ENCODE measurements at regions of chr3 and their contacts with region 1.

Region 1: GRCh38 chr3:124559881-124560574 is 170.2 kb upstream of the UMPS start:
- DNase-seq: peak; percentile 83
- ATAC-seq: peak; percentile 72
- H3K4me3 ChIP-seq: no peak overlapping the region
- H3K27ac ChIP-seq: no peak overlapping the region
- H3K4me1 ChIP-seq: peaks cover 14% of the 10 kb centered on the region
- H3K27me3 ChIP-seq: peaks cover 8% of the 10 kb centered on the region
- CTCF ChIP-seq: peak; percentile 86
- POLR2A ChIP-seq: no peak
- RAD21 ChIP-seq: peak; percentile 83

Region 2: GRCh38 chr3:124014366-124014942 is 545.6 kb before region 1 on chr3:
- CTCF ChIA-PET with region 1: no interaction called
- POLR2A ChIA-PET with region 1: no interaction called
- dilution Hi-C with region 1: no loop called
- in situ Hi-C with region 1: no loop called
- intact Hi-C with region 1: loop called (anchors 5 kb)
- DNase-seq: peak; percentile 17
- ATAC-seq: no peak
- H3K4me3 ChIP-seq: no peak overlapping the region
- H3K27ac ChIP-seq: no peak overlapping the region
- H3K4me1 ChIP-seq: no peaks in the 10 kb centered on the region
- H3K27me3 ChIP-seq: peaks cover 25% of the 10 kb centered on the region
- CTCF ChIP-seq: no peak
- POLR2A ChIP-seq: no peak
- RAD21 ChIP-seq: no peak

Region 3: DNA sequence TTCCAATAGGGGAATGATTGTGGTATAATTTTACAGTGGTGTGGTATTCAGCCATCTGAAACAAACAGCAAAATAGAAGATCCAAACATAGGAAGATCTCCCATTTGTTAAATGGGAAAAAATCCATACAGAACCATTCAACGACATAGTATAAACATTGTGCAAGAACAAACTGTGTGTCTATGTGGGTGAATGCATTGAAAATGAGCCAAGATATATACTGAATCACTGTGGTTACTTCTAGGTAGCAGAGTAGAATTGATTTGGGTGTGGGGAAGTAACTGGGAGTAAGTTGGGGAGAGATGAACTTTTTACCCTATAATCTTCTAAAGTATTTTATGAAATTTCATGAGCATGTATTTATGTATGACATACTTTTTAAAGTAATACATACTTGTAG is 47.1 kb after region 1 on chr3:
- CTCF ChIA-PET with region 1: no interaction called
- POLR2A ChIA-PET with region 1: no interaction called
- dilution Hi-C with region 1: no loop called
- in situ Hi-C with region 1: no loop called
- intact Hi-C with region 1: no loop called
- DNase-seq: peak; percentile 83
- ATAC-seq: peak; percentile 87
- H3K4me3 ChIP-seq: no peak overlapping the region
- H3K27ac ChIP-seq: no peak overlapping the region
- H3K4me1 ChIP-seq: peaks cover 2% of the 10 kb centered on the region; the same call in 1 of the 2 replicates
- H3K27me3 ChIP-seq: peaks cover 26% of the 10 kb centered on the region
- CTCF ChIP-seq: no peak
- POLR2A ChIP-seq: no peak
- RAD21 ChIP-seq: no peak

Region 4: GRCh38 chr3:124688581-124689454 is 128.8 kb after region 1 on chr3:
- CTCF ChIA-PET with region 1: interaction called, 18 read pairs
- POLR2A ChIA-PET with region 1: no interaction called
- dilution Hi-C with region 1: no loop called
- in situ Hi-C with region 1: loop called (anchors 5 kb)
- intact Hi-C with region 1: loop called (anchors 1 kb)
- DNase-seq: peak; percentile 78
- ATAC-seq: peak; percentile 95
- H3K4me3 ChIP-seq: no peak overlapping the region
- H3K27ac ChIP-seq: no peak overlapping the region
- H3K4me1 ChIP-seq: no peaks in the 10 kb centered on the region
- H3K27me3 ChIP-seq: peaks cover 11% of the 10 kb centered on the region
- CTCF ChIP-seq: peak; percentile 86
- POLR2A ChIP-seq: no peak
- RAD21 ChIP-seq: peak; percentile 87

Region 5: DNA sequence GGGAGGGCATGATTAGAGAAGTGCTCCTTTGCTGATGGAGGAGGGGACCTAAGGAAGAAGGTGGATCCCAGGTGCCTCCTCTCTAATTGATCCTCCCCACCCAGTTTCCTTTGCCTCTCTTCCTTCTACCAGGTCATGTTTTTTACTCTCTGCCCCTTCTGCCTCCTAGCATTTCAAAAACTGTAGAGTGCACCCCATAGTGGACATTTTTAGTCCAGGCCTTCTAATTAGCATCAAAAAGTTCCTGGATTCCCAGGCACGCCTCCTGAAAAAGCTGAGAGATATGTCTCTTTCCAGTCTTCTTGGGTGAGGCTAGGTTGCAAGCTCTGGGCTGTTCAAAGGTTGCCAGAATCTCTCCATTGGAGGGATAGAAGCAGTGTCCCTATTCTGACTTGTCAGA is 345.8 kb after region 1 on chr3:
- CTCF ChIA-PET with region 1: interaction called, 4 read pairs
- POLR2A ChIA-PET with region 1: no interaction called
- dilution Hi-C with region 1: no loop called
- in situ Hi-C with region 1: no loop called
- intact Hi-C with region 1: loop called (anchors 1 kb)
- DNase-seq: no peak
- ATAC-seq: no peak
- H3K4me3 ChIP-seq: no peak overlapping the region
- H3K27ac ChIP-seq: no peak overlapping the region
- H3K4me1 ChIP-seq: no peaks in the 10 kb centered on the region
- H3K27me3 ChIP-seq: peaks cover 23% of the 10 kb centered on the region
- CTCF ChIP-seq: no peak
- POLR2A ChIP-seq: no peak
- RAD21 ChIP-seq: no peak

Region 6: GRCh38 chr3:124916837-124917409 is 356.9 kb after region 1 on chr3:
- CTCF ChIA-PET with region 1: no interaction called
- POLR2A ChIA-PET with region 1: no interaction called
- dilution Hi-C with region 1: no loop called
- in situ Hi-C with region 1: no loop called
- intact Hi-C with region 1: no loop called
- DNase-seq: no peak
- ATAC-seq: peak; percentile 53; the same call in 1 of the 2 replicates
- H3K4me3 ChIP-seq: no peak overlapping the region
- H3K27ac ChIP-seq: no peak overlapping the region
- H3K4me1 ChIP-seq: peaks cover 2% of the 10 kb centered on the region; the same call in 1 of the 2 replicates
- H3K27me3 ChIP-seq: peaks cover 29% of the 10 kb centered on the region
- CTCF ChIP-seq: no peak
- POLR2A ChIP-seq: no peak
- RAD21 ChIP-seq: no peak

Region 7: DNA sequence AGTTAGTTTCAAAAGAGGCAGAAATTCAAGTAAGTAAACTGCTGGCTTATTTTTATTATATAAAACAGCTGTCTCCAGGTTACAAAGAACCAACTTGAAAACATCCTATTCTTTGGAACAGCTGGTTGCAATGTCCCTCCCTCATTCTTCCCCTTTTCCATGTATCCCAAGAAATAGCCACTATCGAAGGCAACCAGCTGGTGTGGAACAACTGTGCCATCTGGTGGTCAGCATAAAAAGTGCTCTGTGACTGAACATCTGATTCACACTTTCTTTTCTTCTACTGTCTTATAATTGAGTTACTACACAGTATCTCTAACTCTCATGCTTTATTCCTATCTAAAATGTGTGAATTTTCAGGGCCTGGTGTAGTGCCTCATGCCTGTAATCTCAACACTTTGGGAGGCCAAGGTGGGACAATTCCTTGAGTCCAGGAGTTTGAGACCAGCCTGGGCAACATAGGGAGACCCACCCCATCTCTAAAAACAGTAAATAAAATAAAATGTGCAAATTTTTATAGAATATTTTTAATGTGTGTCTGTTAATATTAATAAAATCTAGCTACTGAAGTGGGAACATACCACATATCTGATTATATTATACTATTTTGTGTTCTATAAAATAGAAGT is 1025.7 kb after region 1 on chr3:
- CTCF ChIA-PET with region 1: no interaction called
- POLR2A ChIA-PET with region 1: no interaction called
- dilution Hi-C with region 1: no loop called
- in situ Hi-C with region 1: no loop called
- intact Hi-C with region 1: loop called (anchors 10 kb)
- DNase-seq: peak; percentile 82
- ATAC-seq: peak; percentile 93
- H3K4me3 ChIP-seq: no peak overlapping the region
- H3K27ac ChIP-seq: no peak overlapping the region
- H3K4me1 ChIP-seq: no peaks in the 10 kb centered on the region
- H3K27me3 ChIP-seq: no peaks in the 10 kb centered on the region
- CTCF ChIP-seq: peak; percentile 93
- POLR2A ChIP-seq: peak; percentile 53; the same call in 1 of the 2 replicates
- RAD21 ChIP-seq: peak; percentile 96

Measured in IMR-90 (cell line).